ENCODE measurements at regions of chr11 and their contacts with region 1.

Region 1: DNA sequence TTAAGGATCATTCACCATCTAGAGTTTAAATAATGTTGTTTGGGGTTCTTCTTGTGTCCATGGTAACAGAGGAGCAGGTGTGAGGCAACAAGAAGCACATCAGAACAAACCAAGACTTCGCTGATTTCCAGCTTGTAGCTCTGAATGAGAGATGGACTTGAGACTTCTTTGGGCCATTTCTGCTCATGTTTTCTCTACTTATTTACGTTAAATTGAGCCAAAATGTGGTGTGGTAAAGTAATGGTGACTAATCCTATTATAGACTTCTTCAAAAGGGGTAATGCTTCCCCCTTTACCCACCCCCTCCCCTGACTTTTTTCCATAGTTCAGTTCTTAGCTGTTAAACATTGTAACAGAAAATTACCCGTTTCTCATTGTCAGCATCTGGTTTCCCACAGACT is 65.2 kb downstream of the CSTPP1 start:
- DNase-seq: no peak
- CTCF ChIP-seq: no peak

Region 2: GRCh38 chr11:46916286-46917108 is 85.3 kb before region 1 on chr11:
- CTCF ChIA-PET with region 1: interaction called, 3 read pairs
- POLR2A ChIA-PET with region 1: interaction called, 10 read pairs
- DNase-seq: peak; percentile 60
- CTCF ChIP-seq: no peak

Region 3: GRCh38 chr11:46951864-46952263 is 49.9 kb before region 1 on chr11:
- CTCF ChIA-PET with region 1: no interaction called
- POLR2A ChIA-PET with region 1: no interaction called
- DNase-seq: no peak
- CTCF ChIP-seq: no peak

Measured in GM10248 (cell line).